CD8-positive, alpha-beta T cell (primary cell): ENCODE measurements at regions of chr2 and their contacts with region 1.

Region 1: DNA sequence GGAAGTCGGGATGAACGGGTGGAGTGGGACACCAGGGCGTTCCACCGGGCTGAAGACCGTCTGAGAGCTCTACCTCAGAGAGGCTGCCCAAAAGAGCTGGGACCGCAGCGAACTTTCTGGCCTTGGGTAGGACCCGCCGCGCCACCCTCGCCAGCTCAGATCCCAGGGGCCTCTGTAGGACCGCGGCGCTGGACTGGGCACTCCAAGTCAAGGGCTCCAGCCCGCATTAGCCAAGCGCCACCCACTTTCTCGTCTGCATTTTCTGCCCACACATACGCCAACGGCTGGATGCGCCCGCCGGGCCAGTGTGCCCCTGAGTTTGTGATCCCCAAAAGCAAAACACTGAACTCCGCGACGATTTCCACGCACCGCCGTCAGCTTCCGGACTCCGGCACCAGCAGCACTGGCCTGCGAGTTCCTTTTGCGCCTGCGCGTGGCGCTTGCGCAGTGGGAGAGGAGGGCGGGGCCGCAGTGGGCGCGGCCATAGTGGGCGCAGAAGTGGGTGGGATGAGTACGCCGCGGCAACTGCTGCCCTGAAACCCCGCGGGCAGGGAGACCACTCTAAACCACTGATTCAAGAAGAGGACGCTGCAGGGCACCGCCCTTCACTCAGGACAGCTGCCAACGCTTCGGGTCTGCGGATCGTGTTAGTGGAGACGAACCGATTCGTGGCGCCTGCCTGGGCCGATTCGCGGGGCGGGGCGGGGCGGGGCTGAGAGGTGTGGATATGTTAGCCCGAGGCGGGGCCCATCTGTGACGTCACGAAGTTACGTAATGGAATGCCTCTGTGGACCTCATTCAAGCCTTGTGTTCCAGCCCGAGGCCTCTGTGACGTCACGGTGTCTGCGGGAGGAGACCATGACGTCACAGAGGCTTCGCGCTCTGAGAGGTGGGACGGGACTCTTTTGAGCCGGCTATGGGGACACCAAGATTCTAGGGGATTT is 10.5 kb downstream of the OSR1 start:
- DNase-seq: peak; percentile 89 to 99 (median 97)
- ATAC-seq: peak; percentile 88
- H3K4me3 ChIP-seq: peak overlapping the region; percentile 76 to 96
- H3K4me3 Mint-ChIP-seq: peak overlapping the region; percentile 96
- H3K27ac ChIP-seq: peak overlapping the region; percentile 86 to 93
- H3K27ac Mint-ChIP-seq: peak overlapping the region; percentile 99
- H3K4me1 ChIP-seq: peaks cover 39% of the 10 kb centered on the region
- H3K4me1 Mint-ChIP-seq: peaks cover 36% of the 10 kb centered on the region
- H3K27me3 ChIP-seq: peaks cover 34% of the 10 kb centered on the region in 2 experiments
- H3K27me3 Mint-ChIP-seq: peaks cover 35% of the 10 kb centered on the region
- CTCF ChIP-seq: no peak

Region 2: DNA sequence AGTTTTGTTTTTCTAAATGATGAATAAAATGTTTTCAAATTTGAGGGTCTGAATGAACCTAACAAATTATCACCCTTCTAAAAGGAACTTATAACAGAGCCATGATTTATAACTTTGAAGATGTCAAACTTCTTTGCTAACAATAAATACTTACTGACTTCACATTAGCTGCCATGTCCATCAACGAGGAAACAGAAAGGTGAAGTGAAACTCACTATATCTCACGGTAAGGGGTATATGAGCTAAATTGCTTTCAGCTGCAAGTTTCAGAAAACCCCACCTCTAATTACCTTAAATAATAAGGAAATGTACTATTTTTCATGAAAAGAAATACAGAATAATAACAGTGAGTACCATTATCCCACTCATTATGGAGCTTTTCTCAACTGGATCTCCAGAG is 407.7 kb before region 1 on chr2:
- CTCF ChIA-PET with region 1: no interaction called
- POLR2A ChIA-PET with region 1: no interaction called
- intact Hi-C with region 1: no loop called
- DNase-seq: no peak
- ATAC-seq: no peak
- H3K4me3 ChIP-seq: no peak overlapping the region
- H3K4me3 Mint-ChIP-seq: no peak overlapping the region
- H3K27ac ChIP-seq: no peak overlapping the region
- H3K27ac Mint-ChIP-seq: no peak overlapping the region
- H3K4me1 ChIP-seq: no peaks in the 10 kb centered on the region
- H3K4me1 Mint-ChIP-seq: no peaks in the 10 kb centered on the region
- H3K27me3 ChIP-seq: no peaks in the 10 kb centered on the region
- H3K27me3 Mint-ChIP-seq: no peaks in the 10 kb centered on the region
- CTCF ChIP-seq: no peak

Region 3: GRCh38 chr2:19336781-19337180 is 11.1 kb before region 1 on chr2:
- CTCF ChIA-PET with region 1: interaction called, 10 read pairs
- POLR2A ChIA-PET with region 1: interaction called, 3 read pairs
- intact Hi-C with region 1: no loop called
- DNase-seq: no peak
- ATAC-seq: no peak
- H3K4me3 ChIP-seq: no peak overlapping the region
- H3K4me3 Mint-ChIP-seq: no peak overlapping the region
- H3K27ac ChIP-seq: no peak overlapping the region
- H3K27ac Mint-ChIP-seq: no peak overlapping the region
- H3K4me1 ChIP-seq: no peaks in the 10 kb centered on the region
- H3K4me1 Mint-ChIP-seq: no peaks in the 10 kb centered on the region
- H3K27me3 ChIP-seq: no peaks in the 10 kb centered on the region
- H3K27me3 Mint-ChIP-seq: no peaks in the 10 kb centered on the region
- CTCF ChIP-seq: no peak

Region 4: DNA sequence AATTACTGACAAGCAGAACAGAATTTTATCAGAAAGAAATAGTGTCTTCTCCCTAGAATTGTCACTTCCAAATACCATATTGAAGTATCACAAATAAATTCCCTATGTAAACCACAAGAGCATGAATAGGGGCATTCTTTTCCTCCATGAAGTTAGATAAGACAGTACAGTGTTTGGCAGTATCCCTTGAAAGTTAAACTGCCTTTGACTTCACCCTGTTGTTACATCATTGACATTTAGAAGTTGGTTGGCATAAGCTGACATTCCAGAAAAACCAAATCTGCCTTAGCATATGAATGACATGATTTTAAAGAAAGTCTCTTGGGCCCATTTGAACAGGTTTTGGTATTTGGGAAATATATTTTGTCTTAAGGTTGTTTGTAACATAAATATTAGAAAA is 60.7 kb after region 1 on chr2:
- CTCF ChIA-PET with region 1: no interaction called
- POLR2A ChIA-PET with region 1: no interaction called
- intact Hi-C with region 1: no loop called
- DNase-seq: no peak
- ATAC-seq: no peak
- H3K4me3 ChIP-seq: no peak overlapping the region
- H3K4me3 Mint-ChIP-seq: no peak overlapping the region
- H3K27ac ChIP-seq: no peak overlapping the region
- H3K27ac Mint-ChIP-seq: no peak overlapping the region
- H3K4me1 ChIP-seq: no peaks in the 10 kb centered on the region
- H3K4me1 Mint-ChIP-seq: no peaks in the 10 kb centered on the region
- H3K27me3 ChIP-seq: no peaks in the 10 kb centered on the region
- H3K27me3 Mint-ChIP-seq: peaks cover 17% of the 10 kb centered on the region
- CTCF ChIP-seq: no peak

Region 5: DNA sequence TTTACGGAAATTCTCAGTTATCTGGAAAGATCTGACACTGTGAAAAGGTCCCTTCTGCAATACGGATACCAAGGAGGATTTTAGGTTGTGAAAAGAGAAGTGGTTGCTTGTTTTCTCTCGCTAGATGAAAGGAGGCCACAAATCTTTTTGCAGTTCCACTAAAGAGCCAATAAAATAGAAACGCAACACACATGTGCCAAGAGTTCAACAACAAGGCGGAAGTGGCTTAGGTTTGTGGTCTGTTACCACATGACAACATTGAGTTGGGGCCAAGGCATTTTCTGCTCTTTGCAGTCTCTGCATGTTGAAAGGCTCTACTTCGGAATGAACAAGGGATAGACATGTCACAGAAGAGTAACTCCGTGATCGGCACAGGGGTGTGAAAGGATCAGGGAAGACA is 126.2 kb after region 1 on chr2:
- CTCF ChIA-PET with region 1: no interaction called
- POLR2A ChIA-PET with region 1: no interaction called
- intact Hi-C with region 1: loop called (anchors 10 kb)
- DNase-seq: peak in 8 of 9 experiments; percentile 12 to 81 (median 47)
- ATAC-seq: peak; percentile 67
- H3K4me3 ChIP-seq: peak overlapping the region in 1 of 2 experiments; percentile 20
- H3K4me3 Mint-ChIP-seq: peak overlapping the region; percentile 2
- H3K27ac ChIP-seq: no peak overlapping the region
- H3K27ac Mint-ChIP-seq: no peak overlapping the region
- H3K4me1 ChIP-seq: peaks cover 16% of the 10 kb centered on the region
- H3K4me1 Mint-ChIP-seq: peaks cover 22% of the 10 kb centered on the region
- H3K27me3 ChIP-seq: peaks cover 0 to 3% of the 10 kb centered on the region in 2 experiments
- H3K27me3 Mint-ChIP-seq: peaks cover 32% of the 10 kb centered on the region
- CTCF ChIP-seq: no peak

Region 6: DNA sequence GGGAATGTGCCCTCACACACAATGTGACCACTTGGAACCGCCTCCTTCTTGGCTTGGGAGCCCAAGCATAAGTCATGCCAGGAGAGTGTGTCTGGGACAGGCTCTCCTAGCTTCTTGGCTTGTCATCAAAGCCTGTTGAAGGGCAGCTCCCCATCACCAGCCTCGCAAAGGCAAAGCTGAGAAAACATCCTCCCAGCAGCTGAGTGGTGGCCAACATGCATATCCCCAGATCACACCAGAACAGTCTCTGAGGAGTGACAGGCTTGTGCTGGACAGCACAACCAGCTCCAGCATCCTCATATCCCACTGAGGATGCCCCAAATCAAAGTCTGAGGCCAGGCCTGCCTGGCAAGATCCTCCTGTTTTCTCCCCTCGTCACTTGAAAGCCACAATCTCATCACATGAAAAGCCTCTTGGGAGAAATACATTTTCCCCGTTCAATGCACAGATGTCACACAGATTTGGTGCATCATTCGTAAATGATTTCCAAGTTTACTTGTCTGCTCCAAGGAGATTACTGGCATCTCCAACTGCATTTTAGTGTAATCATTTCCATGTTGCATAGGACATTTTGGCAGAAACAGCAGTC is 284.6 kb after region 1 on chr2:
- CTCF ChIA-PET with region 1: no interaction called
- POLR2A ChIA-PET with region 1: no interaction called
- intact Hi-C with region 1: no loop called
- DNase-seq: no peak
- ATAC-seq: no peak
- H3K4me3 ChIP-seq: no peak overlapping the region
- H3K4me3 Mint-ChIP-seq: no peak overlapping the region
- H3K27ac ChIP-seq: no peak overlapping the region
- H3K27ac Mint-ChIP-seq: no peak overlapping the region
- H3K4me1 ChIP-seq: no peaks in the 10 kb centered on the region
- H3K4me1 Mint-ChIP-seq: no peaks in the 10 kb centered on the region
- H3K27me3 ChIP-seq: no peaks in the 10 kb centered on the region
- H3K27me3 Mint-ChIP-seq: peaks cover 6% of the 10 kb centered on the region
- CTCF ChIP-seq: no peak

Region 7: DNA sequence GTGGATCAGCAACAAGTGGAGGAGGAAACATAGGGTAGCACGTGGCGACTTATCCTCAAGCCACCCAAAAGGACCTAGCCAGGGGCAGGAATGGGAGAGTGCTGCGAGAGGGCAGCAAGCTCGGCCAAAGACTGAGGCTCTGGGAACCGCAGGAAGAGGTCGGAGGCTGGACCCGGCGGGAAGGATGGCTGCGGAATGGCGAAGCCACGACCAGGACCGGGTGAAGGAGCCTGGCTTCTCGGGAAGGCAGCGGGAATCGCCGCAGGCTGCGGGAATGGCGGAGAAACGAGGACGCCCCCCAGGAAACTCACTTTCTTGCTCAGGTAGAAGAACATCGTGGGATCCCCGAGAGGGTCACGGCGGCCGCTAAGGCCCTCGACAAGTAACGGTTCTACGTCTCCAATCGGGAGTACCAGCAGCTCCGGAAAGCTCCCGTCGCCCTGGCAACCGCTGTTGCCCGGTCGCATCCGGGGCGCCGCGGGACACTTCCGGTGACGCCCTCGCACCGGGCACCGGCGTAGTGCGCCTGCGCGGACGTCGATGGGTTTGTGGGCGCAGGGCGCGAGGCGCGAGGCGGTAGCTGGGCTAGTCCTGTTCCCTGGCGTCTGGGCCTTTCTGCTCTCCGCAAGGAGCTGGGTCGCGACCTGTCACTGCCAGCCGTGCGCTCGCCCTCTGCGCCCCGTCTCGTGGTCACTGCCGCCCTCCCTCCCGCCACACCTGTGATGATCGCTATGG is 642.0 kb after region 1 on chr2 and contains the start of gene WDR35:
- CTCF ChIA-PET with region 1: no interaction called
- POLR2A ChIA-PET with region 1: no interaction called
- intact Hi-C with region 1: loop called (anchors 5 kb)
- DNase-seq: peak; percentile 80 to 96 (median 92)
- ATAC-seq: peak; percentile 94
- H3K4me3 ChIP-seq: peak within 1 kb of the TSS; percentile 84 to 96
- H3K4me3 Mint-ChIP-seq: peak within 1 kb of the TSS; percentile 90
- H3K27ac ChIP-seq: peak within 1 kb of the TSS; percentile 68 to 74
- H3K27ac Mint-ChIP-seq: peak within 1 kb of the TSS; percentile 86
- H3K4me1 ChIP-seq: peaks cover 10% of the 10 kb centered on the region
- H3K4me1 Mint-ChIP-seq: peaks cover 28% of the 10 kb centered on the region
- H3K27me3 ChIP-seq: peaks cover 0 to 3% of the 10 kb centered on the region in 2 experiments
- H3K27me3 Mint-ChIP-seq: peaks cover 14% of the 10 kb centered on the region
- CTCF ChIP-seq: no peak
- total RNA-seq, gene WDR35: 2.4 to 2.9 TPM

Region 8: GRCh38 chr2:20446917-20447436 is 1099.1 kb after region 1 on chr2 and contains the start of gene RHOB:
- CTCF ChIA-PET with region 1: no interaction called
- POLR2A ChIA-PET with region 1: no interaction called
- intact Hi-C with region 1: loop called in 1 of 2 experiments (anchors 10 kb)
- DNase-seq: peak; percentile 77 to 97 (median 86)
- ATAC-seq: peak; percentile 96
- H3K4me3 ChIP-seq: peak within 1 kb of the TSS; percentile 71 to 77
- H3K4me3 Mint-ChIP-seq: peak within 1 kb of the TSS; percentile 85
- H3K27ac ChIP-seq: peak within 1 kb of the TSS; percentile 66 to 78
- H3K27ac Mint-ChIP-seq: peak within 1 kb of the TSS; percentile 57
- H3K4me1 ChIP-seq: peaks cover 17% of the 10 kb centered on the region
- H3K4me1 Mint-ChIP-seq: peaks cover 13% of the 10 kb centered on the region
- H3K27me3 ChIP-seq: peaks cover 0 to 7% of the 10 kb centered on the region in 2 experiments
- H3K27me3 Mint-ChIP-seq: peaks cover 10% of the 10 kb centered on the region
- CTCF ChIP-seq: no peak
- total RNA-seq, gene RHOB: 24.0 to 24.7 TPM